Right ventricle myocardium superior (tissue), 1 donor: ENCODE measurements at regions of chr1 and their contacts with region 1.

Region 1: DNA sequence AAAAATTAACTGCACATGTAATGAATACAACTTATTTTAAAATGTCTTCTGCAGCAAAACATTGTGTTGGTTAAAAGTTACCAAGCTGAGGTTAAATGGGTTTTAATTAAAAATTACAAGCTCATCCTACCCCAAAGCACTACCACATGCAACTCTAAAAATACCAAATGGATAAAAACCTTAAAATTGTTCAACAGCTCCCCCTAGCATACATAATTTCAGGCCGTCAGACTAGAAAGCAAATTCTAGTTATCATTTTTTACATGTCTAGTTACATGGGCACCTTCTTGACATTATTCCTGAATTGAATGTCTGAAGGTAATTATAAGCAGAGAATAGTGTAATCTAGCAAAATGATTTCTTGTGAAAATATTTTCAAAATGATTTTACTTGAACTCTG is 176.5 kb downstream of the C1orf21 start:
- DNase-seq: no peak
- ATAC-seq: peak; percentile 75

Region 2: DNA sequence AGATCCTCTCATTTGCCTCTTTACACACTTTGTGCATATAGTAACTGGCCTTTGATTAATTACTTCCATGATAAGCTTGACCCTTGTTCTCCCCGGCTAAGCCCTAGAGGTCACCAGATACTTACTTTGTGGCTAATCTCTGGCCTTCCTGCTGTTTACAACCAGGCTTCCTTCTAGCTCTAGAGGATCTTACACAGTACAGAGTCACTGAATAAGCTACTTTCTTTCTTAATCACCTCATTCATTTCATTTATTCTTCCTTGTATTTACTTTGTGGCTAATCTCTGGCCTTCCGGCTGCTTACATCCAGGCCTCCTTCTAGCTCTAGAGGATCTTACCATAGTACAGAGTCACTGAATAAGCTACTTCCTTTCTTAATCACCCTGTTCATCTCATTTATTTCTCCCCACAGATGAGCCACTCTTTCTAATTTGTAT is 320.8 kb before region 1 on chr1:
- intact Hi-C with region 1: loop called (anchors 5 kb)
- DNase-seq: no peak
- ATAC-seq: peak; percentile 81

Region 3: DNA sequence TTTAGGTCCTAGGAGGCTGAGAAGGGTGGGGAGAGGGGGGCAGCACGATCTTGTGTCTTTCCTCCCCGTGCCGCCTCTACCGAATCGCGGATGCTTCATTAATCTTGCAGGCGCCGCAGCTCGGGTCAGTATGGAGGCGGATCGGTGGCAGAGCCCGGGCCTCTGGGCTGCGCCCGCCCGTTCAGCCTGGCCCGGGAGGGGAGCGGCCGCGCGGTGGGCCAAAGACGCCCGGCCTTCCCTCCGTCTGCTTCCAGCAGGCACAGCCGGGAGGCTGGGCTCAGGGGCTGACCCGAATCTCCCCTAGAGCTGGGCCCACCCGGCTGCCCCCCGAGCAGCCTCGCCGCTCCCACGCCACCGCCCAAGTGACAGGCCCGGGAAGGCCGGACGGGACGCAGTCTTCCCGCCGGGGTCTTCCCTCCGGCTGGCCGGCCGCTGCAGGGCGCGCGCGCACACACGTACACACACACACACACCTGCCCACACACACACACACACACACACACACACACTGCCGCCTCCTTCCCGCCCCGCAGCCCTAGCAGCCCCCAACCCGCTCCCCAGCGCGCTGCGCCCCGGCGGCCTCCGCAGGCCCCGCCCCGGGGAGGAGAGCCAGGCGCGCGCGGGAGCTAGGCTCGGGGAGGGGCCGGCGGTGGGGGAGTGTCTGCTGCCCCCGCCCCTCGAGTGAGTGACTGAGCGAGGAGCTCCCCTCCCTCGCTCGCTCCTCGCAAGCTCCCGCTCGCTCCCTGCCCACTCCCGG is 176.8 kb before region 1 on chr1 and contains the start of gene C1orf21:
- intact Hi-C with region 1: loop called (anchors 2 kb)
- DNase-seq: peak; percentile 94
- ATAC-seq: peak; percentile 96
- total RNA-seq, gene C1orf21: 47.6 TPM

Region 4: DNA sequence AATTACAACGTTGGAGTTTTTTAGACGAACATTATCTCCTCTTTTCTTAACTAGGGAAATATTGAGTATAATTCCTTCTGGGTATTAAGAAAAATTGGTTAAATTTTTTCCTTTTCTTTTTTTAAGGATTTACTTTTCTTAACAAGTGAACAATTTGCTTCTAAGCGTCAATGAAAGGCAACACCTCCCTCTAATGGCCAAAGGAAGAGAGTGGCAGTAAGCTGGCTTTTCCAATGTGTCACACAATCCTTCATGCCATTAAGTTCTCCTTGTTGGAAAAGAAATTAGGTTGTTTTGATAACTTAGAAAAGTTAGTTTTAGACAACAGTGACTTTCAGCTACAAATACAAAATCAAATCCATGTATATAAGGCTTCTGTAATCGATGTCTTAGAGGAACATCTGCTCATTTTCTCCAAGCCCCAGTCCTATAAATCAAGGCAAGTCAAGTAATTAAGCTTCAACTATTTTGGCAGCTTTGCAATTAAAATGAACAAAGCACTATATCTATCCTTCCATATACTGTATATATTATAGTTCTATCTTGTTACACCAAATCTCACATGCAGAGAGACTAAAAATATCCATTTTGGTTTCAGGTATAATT is 128.5 kb after region 1 on chr1:
- intact Hi-C with region 1: no loop called
- DNase-seq: no peak
- ATAC-seq: peak; percentile 68